ENCODE measurements at regions of chr12 and their contacts with region 1.

Region 1: DNA sequence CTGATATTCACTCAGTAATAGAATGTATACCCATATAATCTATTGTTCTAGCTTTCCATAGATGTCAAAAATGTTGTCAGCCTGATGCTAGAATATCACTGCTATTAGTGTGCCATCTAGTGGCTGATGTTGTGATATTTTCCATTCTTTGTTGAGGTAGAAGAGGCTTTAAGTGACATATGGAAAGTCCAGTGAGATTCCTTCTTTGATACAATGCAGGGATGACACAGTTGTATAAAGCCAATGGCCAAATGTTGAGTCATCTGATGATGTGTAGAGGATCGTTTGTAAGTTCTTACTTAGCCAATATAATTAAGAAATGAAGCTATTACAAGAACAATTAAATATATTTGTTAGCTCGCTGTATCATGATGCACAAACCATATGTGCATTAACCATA is 58.1 kb upstream of the PCED1B start:
- DNase-seq: peak in 4 of 5 donors; percentile 39 to 53 (median 50)
- H3K4me3 ChIP-seq: no peak overlapping the region
- H3K4me3 Mint-ChIP-seq: no peak overlapping the region
- H3K27ac ChIP-seq: no peak overlapping the region
- H3K27ac Mint-ChIP-seq: no peak overlapping the region
- H3K4me1 ChIP-seq: no peaks in the 10 kb centered on the region
- H3K4me1 Mint-ChIP-seq: no peaks in the 10 kb centered on the region
- H3K27me3 ChIP-seq: no peaks in the 10 kb centered on the region
- H3K27me3 Mint-ChIP-seq: peaks cover 14 to 20% of the 10 kb centered on the region in 2 donors

Region 2: DNA sequence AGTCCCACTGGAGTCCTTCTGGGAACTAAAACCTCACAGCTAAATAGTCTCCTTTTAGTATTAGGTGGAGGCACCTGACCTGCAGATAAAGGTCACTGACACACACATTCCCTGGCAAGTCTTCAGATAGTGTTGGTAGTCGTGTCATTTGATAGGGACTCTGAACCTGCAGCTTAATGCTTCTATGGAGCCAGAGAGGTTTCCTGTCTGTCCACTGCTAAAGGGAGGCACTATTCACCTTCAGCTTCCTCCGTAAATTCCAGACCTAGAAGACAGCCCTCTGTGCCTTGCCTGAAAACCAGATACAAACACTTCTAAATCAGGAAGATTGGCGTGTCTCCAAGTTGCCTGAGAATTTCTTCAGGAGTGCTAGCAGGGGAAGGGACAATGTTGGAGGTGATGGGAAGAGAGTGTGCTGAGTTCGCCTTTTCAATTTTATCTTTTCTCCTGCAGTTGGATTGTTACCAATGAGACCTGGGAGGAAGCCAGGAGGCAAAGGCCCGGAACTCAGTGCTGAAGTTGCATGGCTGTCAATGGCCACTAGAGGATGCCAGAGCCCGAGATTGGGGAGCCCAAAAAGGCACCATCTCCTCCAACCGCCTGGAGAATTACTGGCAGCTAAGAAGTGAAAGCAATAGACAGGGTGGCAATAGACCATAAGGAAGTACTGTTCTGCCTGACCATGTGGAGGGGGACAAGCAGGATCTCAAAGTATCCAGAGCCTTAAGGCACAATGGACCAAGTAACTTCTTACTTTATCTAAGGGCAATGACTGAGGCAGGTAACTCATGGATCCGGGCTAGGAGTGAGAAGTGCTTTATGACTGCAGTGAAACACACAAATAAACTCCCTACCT is 949.3 kb before region 1 on chr12:
- CTCF ChIA-PET with region 1: interaction called, 13 read pairs
- POLR2A ChIA-PET with region 1: no interaction called
- intact Hi-C with region 1: no loop called
- DNase-seq: peak; percentile 42 to 68 (median 48)
- H3K4me3 ChIP-seq: no peak overlapping the region
- H3K4me3 Mint-ChIP-seq: no peak overlapping the region
- H3K27ac ChIP-seq: no peak overlapping the region
- H3K27ac Mint-ChIP-seq: peak overlapping the region in 2 of 7 donors; percentile 2 to 15
- H3K4me1 ChIP-seq: no peaks in the 10 kb centered on the region
- H3K4me1 Mint-ChIP-seq: peaks cover 0 to 5% (median 2%) of the 10 kb centered on the region in 4 donors
- H3K27me3 ChIP-seq: no peaks in the 10 kb centered on the region
- H3K27me3 Mint-ChIP-seq: peaks cover 3 to 5% of the 10 kb centered on the region in 2 donors

Region 3: DNA sequence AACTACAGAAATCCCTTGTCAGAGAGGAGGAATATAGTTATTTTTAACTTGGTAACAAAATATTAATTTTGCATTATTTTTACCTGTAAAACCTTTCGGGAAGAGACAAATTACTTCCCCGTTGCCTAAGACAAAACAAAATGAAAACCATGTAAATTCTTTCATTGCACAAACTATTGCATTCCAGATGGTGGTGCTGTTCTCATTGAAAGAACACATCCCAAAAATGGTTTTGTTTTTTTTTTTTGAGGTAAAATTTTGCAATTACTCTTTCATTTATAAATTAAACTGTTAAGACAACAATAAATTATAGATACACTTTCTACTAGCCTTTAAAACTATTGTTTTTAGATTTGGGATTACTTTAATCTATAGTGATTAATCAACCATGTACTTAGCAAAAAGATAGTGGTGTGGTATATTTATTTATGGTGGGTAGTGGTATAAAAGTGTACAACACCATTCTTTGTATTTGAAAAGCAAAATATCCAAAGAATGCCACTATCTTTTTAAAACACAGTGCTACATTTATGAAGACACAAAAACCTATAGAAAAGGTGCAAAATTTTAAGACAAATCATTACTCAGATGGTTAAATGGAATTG is 867.9 kb before region 1 on chr12:
- CTCF ChIA-PET with region 1: interaction called, 3 read pairs
- POLR2A ChIA-PET with region 1: no interaction called
- intact Hi-C with region 1: loop called (anchors 1 kb)
- DNase-seq: peak in 4 of 5 donors; percentile 38 to 50 (median 45)
- H3K4me3 ChIP-seq: no peak overlapping the region
- H3K4me3 Mint-ChIP-seq: no peak overlapping the region
- H3K27ac ChIP-seq: no peak overlapping the region
- H3K27ac Mint-ChIP-seq: no peak overlapping the region
- H3K4me1 ChIP-seq: peaks cover 11% of the 10 kb centered on the region
- H3K4me1 Mint-ChIP-seq: peaks cover 0 to 11% (median 9%) of the 10 kb centered on the region in 4 donors
- H3K27me3 ChIP-seq: no peaks in the 10 kb centered on the region
- H3K27me3 Mint-ChIP-seq: peaks cover under 1 to 4% of the 10 kb centered on the region in 2 donors

Region 4: GRCh38 chr12:46342562-46343033 is 678.7 kb before region 1 on chr12:
- CTCF ChIA-PET with region 1: interaction called, 29 read pairs
- POLR2A ChIA-PET with region 1: no interaction called
- intact Hi-C with region 1: loop called (anchors 1 kb)
- DNase-seq: peak in 4 of 5 donors; percentile 36 to 45 (median 39)
- H3K4me3 ChIP-seq: no peak overlapping the region
- H3K4me3 Mint-ChIP-seq: no peak overlapping the region
- H3K27ac ChIP-seq: no peak overlapping the region
- H3K27ac Mint-ChIP-seq: no peak overlapping the region
- H3K4me1 ChIP-seq: no peaks in the 10 kb centered on the region
- H3K4me1 Mint-ChIP-seq: no peaks in the 10 kb centered on the region
- H3K27me3 ChIP-seq: no peaks in the 10 kb centered on the region
- H3K27me3 Mint-ChIP-seq: peaks cover 5% of the 10 kb centered on the region in 2 donors

Region 5: DNA sequence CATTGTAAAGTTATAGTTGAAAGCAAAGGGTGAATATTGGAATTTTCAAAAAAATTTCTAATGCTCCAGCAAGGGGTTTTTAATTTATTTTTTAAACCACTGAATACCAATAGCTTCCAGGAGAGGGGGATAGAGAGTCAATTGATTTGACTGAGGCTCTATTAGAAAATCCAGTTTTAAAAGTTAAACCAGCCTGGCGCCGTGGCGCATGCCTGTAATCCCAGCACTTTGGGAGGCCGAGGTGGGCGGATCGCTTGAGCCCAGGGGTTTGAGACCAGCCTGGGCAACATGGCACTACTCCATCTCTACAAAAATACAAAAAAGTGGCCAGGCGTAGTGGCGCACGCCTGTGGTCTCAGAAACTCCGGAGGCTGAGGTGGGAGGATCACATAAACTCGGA is 345.6 kb before region 1 on chr12:
- CTCF ChIA-PET with region 1: no interaction called
- POLR2A ChIA-PET with region 1: no interaction called
- intact Hi-C with region 1: loop called (anchors 10 kb)
- DNase-seq: peak in 4 of 5 donors; percentile 15 to 36 (median 22)
- H3K4me3 ChIP-seq: no peak overlapping the region
- H3K4me3 Mint-ChIP-seq: no peak overlapping the region
- H3K27ac ChIP-seq: no peak overlapping the region
- H3K27ac Mint-ChIP-seq: no peak overlapping the region
- H3K4me1 ChIP-seq: no peaks in the 10 kb centered on the region
- H3K4me1 Mint-ChIP-seq: no peaks in the 10 kb centered on the region
- H3K27me3 ChIP-seq: no peaks in the 10 kb centered on the region
- H3K27me3 Mint-ChIP-seq: peaks cover 2 to 3% of the 10 kb centered on the region in 2 donors